Ascending aorta (tissue), 2 donors: ENCODE measurements at regions of chr1 and their contacts with region 1.

Region 1: DNA sequence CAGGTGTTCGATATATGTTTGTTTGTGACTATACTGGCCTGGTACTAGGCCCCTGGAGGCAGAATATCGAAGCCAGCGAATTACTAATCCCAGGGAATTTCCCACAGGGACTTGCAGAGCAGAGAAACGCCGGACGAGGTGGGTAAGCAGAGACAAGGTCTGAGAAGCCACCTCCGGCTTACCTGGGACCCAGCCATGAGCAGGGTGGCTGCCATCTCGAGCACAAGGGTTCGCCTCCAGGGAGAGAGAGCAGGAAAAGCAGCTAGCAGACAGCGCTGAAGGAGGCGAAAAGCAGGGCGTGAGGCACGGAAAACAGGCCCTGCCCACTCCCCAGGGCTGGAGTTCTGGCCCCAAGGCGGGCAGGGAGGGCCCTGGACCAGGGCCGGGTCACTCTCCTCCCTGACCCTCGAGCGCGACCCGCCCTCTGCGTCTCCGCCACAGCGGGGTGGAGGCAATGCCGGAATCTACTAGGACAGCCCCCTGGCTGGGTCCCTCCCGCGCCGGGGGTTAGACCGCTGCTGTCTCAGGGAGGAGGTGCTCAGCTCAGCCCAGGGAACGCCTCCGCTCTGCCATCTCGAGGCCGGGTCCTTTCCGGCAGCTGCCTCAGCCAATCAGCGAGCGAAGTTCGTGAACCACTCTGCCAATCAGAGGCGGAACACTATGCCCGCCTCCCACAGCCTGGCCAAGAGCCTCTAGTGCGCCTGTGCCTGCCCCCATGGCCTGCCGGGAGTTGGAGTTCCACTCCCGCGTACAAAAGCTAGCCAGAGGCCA is 1.7 kb downstream of the ZNF436 start:
- DNase-seq: peak; percentile 96 to 99
- H3K4me3 ChIP-seq: peak overlapping the region; percentile 76 to 78
- H3K27ac ChIP-seq: peak overlapping the region; percentile 98
- H3K4me1 ChIP-seq: peaks cover 9 to 26% of the 10 kb centered on the region in 2 donors
- H3K27me3 ChIP-seq: no peaks in the 10 kb centered on the region
- CTCF ChIP-seq: no peak

Region 2: DNA sequence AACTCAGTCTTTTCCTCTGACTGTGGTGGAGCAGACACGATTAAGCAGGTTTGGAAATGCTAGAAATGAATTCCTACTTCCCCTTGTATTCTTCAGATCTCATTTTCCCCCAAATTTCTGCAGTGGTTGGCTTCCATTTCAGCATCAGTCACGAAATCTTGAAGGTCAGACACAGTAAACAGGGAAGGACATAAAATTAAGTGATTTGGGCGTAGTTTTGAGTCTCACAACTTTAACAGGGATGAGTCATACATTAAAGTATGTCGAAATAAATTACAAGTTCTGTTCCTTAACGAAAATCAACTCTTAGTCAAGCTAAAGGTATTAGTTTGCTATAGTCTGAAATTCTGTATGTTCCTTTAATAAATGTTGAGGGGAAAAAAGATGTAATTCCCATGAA is 85.0 kb before region 1 on chr1:
- intact Hi-C with region 1: no loop called
- DNase-seq: no peak
- H3K4me3 ChIP-seq: no peak overlapping the region
- H3K27ac ChIP-seq: no peak overlapping the region
- H3K4me1 ChIP-seq: no peaks in the 10 kb centered on the region
- H3K27me3 ChIP-seq: no peaks in the 10 kb centered on the region
- CTCF ChIP-seq: no peak

Region 3: GRCh38 chr1:23403735-23404486 is 35.9 kb after region 1 on chr1:
- intact Hi-C with region 1: loop called (anchors 2 kb)
- DNase-seq: peak; percentile 53 to 92
- H3K4me3 ChIP-seq: peak overlapping the region in 1 of 2 donors; percentile 39
- H3K27ac ChIP-seq: peak overlapping the region; percentile 47 to 68
- H3K4me1 ChIP-seq: peaks cover 3 to 16% of the 10 kb centered on the region in 2 donors
- H3K27me3 ChIP-seq: no peaks in the 10 kb centered on the region
- CTCF ChIP-seq: peak; percentile 88 to 98 (median 98)

Region 4: DNA sequence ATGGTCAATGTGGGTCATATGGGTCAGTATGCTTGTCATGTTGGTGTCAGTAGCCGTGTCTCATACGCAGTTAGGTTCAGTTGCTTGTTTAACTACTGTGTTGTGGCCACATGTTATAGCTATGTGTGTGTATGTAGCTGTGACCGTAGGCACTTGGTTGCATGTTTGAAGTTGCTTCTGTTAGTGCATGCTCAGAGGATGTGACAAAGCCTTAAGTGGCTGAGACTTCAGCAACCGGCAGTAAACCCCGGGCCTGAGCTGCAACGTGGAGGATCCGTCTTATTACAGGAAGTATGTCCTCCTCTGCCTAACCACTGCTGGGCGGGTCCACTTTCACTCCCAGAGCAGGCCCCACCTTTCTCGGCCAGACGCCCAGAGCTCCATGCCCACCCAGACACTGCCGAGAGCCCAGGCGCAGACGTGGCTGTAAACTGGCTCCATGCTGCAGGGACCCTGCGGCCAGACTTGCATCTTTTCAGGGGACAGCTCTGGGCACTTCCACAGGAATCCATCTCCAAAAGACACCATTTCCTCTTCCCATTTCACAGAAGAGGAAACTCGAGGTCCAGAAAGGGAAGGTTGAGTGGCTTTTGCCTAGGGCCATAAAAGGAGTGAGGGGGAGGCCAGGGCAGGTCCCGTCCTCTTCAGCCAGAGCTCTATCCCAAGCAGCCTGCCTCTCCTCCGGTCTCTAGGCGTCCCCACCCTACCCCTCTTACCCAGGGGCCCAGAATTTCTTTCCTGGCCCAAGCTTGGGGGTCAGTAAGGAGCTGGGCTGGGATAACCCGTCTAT is 54.5 kb after region 1 on chr1:
- intact Hi-C with region 1: loop called (anchors 2 kb)
- DNase-seq: peak; percentile 39 to 86
- H3K4me3 ChIP-seq: peak overlapping the region; percentile 30 to 91
- H3K27ac ChIP-seq: peak overlapping the region; percentile 85 to 86
- H3K4me1 ChIP-seq: peaks cover 0 to 23% of the 10 kb centered on the region in 2 donors
- H3K27me3 ChIP-seq: no peaks in the 10 kb centered on the region
- CTCF ChIP-seq: no peak